Dorsolateral prefrontal cortex (tissue), 120 donors: ENCODE measurements at regions of chr19 and their contacts with region 1.

Region 1: GRCh38 chr19:36687214-36688056 is at the start of gene ZNF567:
- DNase-seq: peak; percentile 96 to 99 (median 98)
- H3K4me3 ChIP-seq: peak within 1 kb of the TSS; percentile 63 to 100 (median 93)
- H3K27ac ChIP-seq: peak within 1 kb of the TSS in 52 of 59 donors; percentile 2 to 87 (median 62)
- H3K27me3 ChIP-seq: no peaks in the 10 kb centered on the region
- CTCF ChIP-seq: peak in 24 of 56 donors; percentile 12 to 54 (median 28)
- total RNA-seq, gene ZNF567: 5.6 to 15.0 (median 8.9) TPM

Region 2: DNA sequence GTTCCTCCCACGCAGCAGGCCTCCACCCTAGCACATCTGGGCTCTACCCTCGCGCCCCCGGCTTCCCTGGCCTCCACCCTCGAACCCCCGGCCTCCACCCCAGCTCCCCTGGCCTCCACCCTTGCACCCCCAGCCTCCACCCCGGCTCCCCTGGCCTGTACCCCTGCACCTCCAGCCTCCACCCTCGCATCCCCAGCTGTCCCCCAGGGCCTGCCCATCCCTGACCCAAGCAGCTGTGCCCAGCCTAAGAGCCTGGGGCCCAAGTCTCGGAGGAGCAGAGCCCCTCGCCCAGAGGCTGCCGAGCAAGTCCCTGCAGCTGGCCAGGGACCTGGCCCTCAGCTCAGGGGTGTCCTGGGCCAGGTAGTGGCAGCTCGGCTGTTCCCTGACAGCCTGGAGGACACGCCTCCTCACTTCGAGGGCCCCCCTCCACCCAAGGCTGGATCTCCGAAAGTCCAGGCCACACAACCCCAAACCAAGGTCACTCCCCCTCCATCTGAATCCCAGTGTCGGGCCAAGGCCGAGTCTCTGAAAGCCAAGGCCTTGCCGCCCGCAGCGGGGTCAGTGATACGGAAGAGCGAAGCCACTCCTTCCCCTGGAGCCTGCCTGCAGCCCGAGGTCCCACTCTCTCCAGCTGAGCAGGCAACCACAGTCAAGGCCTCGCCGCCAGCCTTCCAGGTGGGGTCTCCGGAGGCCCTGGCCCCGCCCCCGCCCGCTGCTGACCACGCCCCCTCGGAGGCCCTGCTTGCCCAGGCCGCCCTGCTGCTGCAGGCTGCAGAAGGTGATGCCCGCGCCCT is 920.0 kb before region 1 on chr19:
- intact Hi-C with region 1: loop called in 1 of 2 experiments (anchors 10 kb)
- DNase-seq: no peak
- H3K4me3 ChIP-seq: no peak overlapping the region
- H3K27ac ChIP-seq: no peak overlapping the region
- H3K27me3 ChIP-seq: no peaks in the 10 kb centered on the region
- CTCF ChIP-seq: no peak

Region 3: GRCh38 chr19:36665832-36666231 is 21.6 kb before region 1 on chr19:
- intact Hi-C with region 1: loop called in 1 of 2 experiments (anchors 1 kb)
- DNase-seq: no peak
- H3K4me3 ChIP-seq: peak overlapping the region; percentile 61 to 100 (median 85)
- H3K27ac ChIP-seq: peak overlapping the region in 2 of 59 donors; percentile 84 to 89
- H3K27me3 ChIP-seq: no peaks in the 10 kb centered on the region
- CTCF ChIP-seq: no peak

Region 4: GRCh38 chr19:36837906-36838783 is 150.7 kb after region 1 on chr19 and contains the start of gene ZNF790:
- intact Hi-C with region 1: loop called in 1 of 2 experiments (anchors 2 kb)
- DNase-seq: peak; percentile 87 to 95 (median 93)
- H3K4me3 ChIP-seq: peak within 1 kb of the TSS; percentile 65 to 99 (median 82)
- H3K27ac ChIP-seq: peak within 1 kb of the TSS; percentile 79 to 99 (median 94)
- H3K27me3 ChIP-seq: no peaks in the 10 kb centered on the region
- CTCF ChIP-seq: peak in 7 of 56 donors; percentile 13 to 28 (median 17)
- total RNA-seq, gene ZNF790: 8.6 to 21.8 (median 12.8) TPM

Region 5: DNA sequence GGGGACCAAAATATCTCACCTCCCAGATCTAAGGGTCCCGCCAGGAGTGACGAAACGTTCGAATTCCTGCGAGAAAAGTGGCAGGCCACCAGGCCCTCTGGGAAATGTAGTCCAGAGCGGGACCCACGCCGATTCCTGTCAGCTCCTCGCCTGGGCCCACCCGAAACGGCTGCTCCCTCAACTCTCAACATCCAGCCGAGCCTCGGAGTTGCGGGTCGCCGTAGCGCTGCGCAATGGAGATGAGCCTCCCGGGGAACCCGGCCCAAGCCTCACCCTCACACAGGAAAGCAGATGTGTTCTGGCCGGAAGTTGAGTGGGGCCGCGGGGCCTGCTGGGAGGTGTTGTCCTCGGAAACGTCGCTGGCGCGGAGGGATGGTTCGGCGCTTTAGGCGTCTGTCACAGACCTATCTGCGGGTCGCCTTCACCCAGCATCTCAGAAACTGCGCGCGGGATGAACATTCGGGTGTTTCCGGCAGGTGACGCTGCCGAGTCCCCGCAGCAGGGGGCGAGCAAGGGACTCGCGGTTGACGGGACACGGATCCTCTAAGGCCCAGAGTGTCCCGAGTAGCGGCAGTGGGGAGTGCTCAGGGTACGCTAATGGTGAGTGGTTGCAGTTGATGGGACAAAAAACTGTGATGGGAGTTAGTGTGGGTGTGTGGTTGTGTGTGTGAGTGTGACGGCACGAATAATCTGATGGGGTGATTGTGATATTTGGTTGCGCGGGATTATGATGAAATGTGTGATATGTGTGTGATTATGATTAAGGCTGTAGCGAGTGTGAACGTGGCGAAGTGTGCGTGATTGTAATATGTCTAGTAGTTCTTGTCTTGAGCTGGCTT is 228.8 kb after region 1 on chr19 and contains the starts of genes ZNF568 and ZNF829:
- intact Hi-C with region 1: loop called in 1 of 2 experiments (anchors 10 kb)
- DNase-seq: peak; percentile 83 to 94 (median 92)
- H3K4me3 ChIP-seq: peak within 1 kb of the TSS; percentile 59 to 98 (median 83)
- H3K27ac ChIP-seq: peak within 1 kb of the TSS; percentile 89 to 100 (median 97)
- H3K27me3 ChIP-seq: no peaks in the 10 kb centered on the region
- CTCF ChIP-seq: peak in 55 of 56 donors; percentile 23 to 77 (median 58)
- total RNA-seq, gene ZNF568: 17.6 to 31.2 (median 23.0) TPM
- total RNA-seq, gene ZNF829: 3.1 to 8.6 (median 4.9) TPM